ENCODE measurements at regions of chr7 and their contacts with region 1.

Region 1: DNA sequence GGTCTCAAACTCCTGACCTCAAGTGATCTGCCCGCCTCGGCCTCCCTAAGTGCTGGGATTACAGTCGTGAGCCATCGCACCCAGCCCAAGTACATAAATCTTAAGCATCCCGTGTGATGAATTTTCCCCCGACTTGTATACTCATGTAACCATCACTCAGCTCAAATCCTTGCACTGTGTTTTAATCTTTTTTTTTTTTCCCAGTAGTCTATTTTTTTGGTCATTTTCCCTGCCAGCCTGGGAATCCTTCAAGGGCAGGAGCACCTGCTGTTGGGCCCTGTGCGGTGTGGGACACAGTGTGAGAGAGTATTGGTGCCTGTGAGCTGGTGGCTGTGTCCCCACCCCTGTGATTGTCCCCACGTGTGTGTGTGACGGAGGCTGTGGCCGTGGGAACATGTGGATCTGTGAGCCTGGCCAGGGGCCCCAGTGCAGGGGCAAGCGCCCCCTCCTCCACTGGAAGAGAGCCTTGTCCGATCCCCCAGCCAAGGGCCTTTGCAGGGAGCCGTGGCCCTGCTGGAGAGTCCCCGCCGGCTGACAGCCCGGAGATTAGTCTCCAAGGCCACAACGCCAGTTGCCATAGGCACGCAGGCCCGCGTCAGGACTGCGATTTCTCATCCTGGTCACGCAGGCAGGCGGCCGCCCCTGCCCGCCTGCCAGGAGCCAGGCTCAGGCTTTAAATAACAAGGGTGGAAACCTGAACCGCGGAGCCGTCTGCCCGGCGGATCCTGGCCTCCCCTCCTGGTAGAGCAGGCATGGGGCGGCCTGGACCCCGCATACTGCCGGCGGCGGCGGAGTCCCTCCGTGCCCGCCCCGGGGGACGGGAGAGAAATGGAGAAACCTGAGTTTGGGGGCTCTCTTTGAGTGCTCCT is 26.5 kb downstream of the GTF2IRD1 start:
- DNase-seq: peak; percentile 82
- H3K4me3 ChIP-seq: peak overlapping the region; percentile 11 to 47 (median 20)
- H3K27ac ChIP-seq: peak overlapping the region; percentile 92
- H3K4me1 ChIP-seq: peaks cover 33% of the 10 kb centered on the region
- H3K27me3 ChIP-seq: no peaks in the 10 kb centered on the region
- CTCF ChIP-seq: no peak
- POLR2A ChIP-seq: no peak

Region 2: GRCh38 chr7:74455928-74456327 is 24.3 kb before region 1 on chr7:
- CTCF ChIA-PET with region 1: interaction called, 4 read pairs
- POLR2A ChIA-PET with region 1: no interaction called
- dilution Hi-C with region 1: no loop called
- intact Hi-C with region 1: loop called (anchors 2 kb)
- DNase-seq: no peak
- H3K4me3 ChIP-seq: no peak overlapping the region
- H3K27ac ChIP-seq: no peak overlapping the region
- H3K4me1 ChIP-seq: peaks cover 9% of the 10 kb centered on the region
- H3K27me3 ChIP-seq: no peaks in the 10 kb centered on the region
- CTCF ChIP-seq: no peak
- POLR2A ChIP-seq: no peak